ENCODE measurements at regions of chr2 and their contacts with region 1.

Region 1: DNA sequence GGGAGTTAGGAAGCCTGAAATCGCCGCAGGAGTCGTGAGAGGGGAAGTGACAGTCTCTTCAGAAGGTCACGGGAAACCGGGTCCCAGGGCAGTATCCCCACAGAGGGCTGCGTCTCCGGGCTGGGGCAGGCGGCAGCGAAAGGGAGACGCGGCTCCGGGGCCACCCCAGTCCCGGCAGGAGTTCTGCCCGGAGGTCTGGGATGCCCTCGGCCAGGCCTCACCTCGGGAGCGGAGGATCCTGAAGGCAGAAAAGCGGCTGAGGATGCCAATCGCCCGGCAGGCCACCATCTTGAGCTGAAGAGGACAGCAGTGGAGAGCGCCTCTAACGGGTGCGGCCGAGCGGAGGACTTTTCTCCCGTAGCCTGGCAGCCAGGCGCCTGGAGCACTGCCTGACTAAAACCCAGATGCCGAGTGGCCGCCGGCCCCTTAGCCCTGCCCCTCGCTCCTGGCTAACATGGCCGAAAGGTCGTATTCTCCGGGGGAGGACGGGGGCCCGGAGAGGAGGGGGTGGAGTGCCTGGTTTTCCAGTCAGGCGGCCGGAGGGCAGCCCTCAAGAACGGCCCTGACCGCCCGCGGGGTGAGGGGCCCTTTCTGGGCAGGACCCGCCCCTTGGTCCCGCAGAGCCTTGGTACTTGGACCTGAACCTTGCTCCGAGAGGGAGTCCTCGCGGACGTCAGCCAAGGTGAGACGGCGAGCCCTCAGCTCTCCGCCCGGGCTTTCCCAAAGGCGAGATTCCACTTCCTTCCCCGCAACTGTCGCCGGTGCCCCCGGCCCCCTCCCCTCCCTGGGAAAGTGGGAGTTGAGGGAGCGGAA is at the starts of genes HADHA and HADHB:
- DNase-seq: peak; percentile 87 to 94 (median 90)
- H3K4me3 ChIP-seq: peak within 1 kb of the TSS; percentile 75 to 84
- H3K4me3 Mint-ChIP-seq: peak within 1 kb of the TSS; percentile 91 to 100 (median 99)
- H3K27ac ChIP-seq: peak within 1 kb of the TSS; percentile 89
- H3K27ac Mint-ChIP-seq: peak within 1 kb of the TSS; percentile 95 to 100 (median 100)
- H3K4me1 ChIP-seq: peaks cover 43% of the 10 kb centered on the region
- H3K4me1 Mint-ChIP-seq: peaks cover 38 to 70% (median 50%) of the 10 kb centered on the region in 4 donors
- H3K27me3 ChIP-seq: no peaks in the 10 kb centered on the region
- H3K27me3 Mint-ChIP-seq: no peaks in the 10 kb centered on the region
- total RNA-seq, gene HADHA: 89.1 to 93.6 TPM
- total RNA-seq, gene HADHB: 58.8 to 67.1 TPM

Region 2: DNA sequence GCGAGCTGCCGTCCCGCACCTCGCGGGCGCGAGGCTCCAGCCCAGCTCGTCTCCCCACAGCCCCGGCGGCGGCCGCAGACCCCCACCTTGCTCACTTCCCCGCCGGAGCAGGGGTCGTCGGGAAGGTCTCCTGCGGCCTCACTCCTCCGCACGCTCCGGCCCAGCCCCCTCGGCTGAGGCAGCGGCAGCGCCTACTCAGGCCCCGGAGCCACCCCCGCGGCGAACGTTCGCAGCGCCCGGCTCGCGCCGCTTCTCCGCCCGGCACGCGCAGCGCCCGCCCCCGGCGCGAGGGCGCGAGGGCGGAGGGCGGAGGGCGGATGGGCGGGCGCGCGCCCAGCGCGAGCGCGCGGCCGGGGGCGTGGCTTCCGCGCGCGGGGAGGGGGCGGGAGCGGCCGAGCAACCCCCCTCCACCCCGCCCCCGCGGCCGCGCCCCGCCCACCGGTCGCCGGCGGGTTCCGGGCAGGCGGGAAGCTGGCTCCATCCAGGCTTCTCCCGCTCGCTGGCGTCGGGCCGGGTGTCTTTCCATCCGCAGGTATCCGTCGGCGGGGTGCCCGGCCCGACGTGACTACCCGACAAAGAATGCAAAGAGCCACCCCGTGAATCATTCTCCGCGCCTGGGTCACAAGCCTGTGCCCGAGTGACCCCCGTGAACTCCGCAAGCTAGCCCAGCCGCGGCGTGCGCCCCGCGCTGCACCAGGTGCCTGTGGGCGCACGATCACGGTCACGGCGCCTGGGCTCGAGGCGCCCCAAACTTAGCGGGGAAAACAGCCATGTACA is 571.0 kb before region 1 on chr2 and contains the start of gene DTNB:
- CTCF ChIA-PET with region 1: no interaction called
- POLR2A ChIA-PET with region 1: no interaction called
- intact Hi-C with region 1: loop called (anchors 5 kb)
- DNase-seq: peak; percentile 76 to 82 (median 79)
- H3K4me3 ChIP-seq: peak within 1 kb of the TSS; percentile 80 to 92
- H3K4me3 Mint-ChIP-seq: peak within 1 kb of the TSS; percentile 85 to 92 (median 88)
- H3K27ac ChIP-seq: peak within 1 kb of the TSS; percentile 69
- H3K27ac Mint-ChIP-seq: peak within 1 kb of the TSS; percentile 75 to 92 (median 86)
- H3K4me1 ChIP-seq: peaks cover 28% of the 10 kb centered on the region
- H3K4me1 Mint-ChIP-seq: peaks cover 20 to 36% (median 29%) of the 10 kb centered on the region in 4 donors
- H3K27me3 ChIP-seq: no peaks in the 10 kb centered on the region
- H3K27me3 Mint-ChIP-seq: no peaks in the 10 kb centered on the region
- total RNA-seq, gene DTNB: 42.1 to 45.3 TPM

Region 3: GRCh38 chr2:25960920-25961319 is 283.6 kb before region 1 on chr2:
- CTCF ChIA-PET with region 1: no interaction called
- POLR2A ChIA-PET with region 1: no interaction called
- intact Hi-C with region 1: no loop called
- DNase-seq: no peak
- H3K4me3 ChIP-seq: no peak overlapping the region
- H3K4me3 Mint-ChIP-seq: peak overlapping the region in 5 of 8 donors; percentile 13 to 67 (median 62)
- H3K27ac ChIP-seq: no peak overlapping the region
- H3K27ac Mint-ChIP-seq: peak overlapping the region in 4 of 7 donors; percentile 13 to 86 (median 39)
- H3K4me1 ChIP-seq: peaks cover 14% of the 10 kb centered on the region
- H3K4me1 Mint-ChIP-seq: peaks cover 7 to 21% (median 10%) of the 10 kb centered on the region in 4 donors
- H3K27me3 ChIP-seq: no peaks in the 10 kb centered on the region
- H3K27me3 Mint-ChIP-seq: no peaks in the 10 kb centered on the region

Region 4: DNA sequence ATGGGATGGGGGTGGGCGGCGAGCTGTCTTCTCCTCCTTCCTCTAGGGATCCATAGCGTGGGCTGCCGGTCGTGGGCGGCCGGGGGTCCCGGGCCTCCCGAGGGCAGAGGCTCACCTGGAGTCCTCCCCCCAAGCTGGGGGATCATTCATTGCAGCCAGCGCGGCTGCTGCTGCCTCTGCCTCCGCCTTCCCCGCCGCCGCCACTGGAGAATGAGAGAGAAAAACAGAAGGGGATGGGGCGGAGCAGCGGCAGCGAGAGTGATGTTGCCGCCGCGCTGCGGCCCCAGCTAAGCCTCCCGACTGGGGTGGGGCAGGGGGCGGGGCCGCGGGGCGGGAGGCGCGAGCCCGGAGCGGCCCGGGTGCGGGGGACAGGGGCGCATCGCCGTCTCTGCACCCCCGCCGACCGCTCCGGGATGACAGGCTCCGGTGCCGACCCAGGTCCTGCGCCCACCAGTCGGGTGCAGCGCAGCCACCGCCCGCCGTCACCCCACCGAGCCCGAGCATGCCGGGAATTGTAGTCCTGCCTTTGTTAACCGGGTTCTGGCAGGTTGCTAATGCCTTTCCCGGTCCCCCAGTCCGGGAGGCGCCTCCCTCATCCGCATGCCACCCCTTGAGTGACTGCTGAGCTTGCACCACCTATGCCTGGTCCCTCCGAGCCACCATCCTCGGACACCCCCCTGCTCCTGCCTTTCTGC is 262.1 kb before region 1 on chr2 and contains the start of gene KIF3C:
- CTCF ChIA-PET with region 1: no interaction called
- POLR2A ChIA-PET with region 1: no interaction called
- intact Hi-C with region 1: loop called (anchors 1 kb)
- DNase-seq: peak; percentile 71 to 81 (median 74)
- H3K4me3 ChIP-seq: peak within 1 kb of the TSS; percentile 36 to 66
- H3K4me3 Mint-ChIP-seq: peak within 1 kb of the TSS; percentile 83 to 92 (median 87)
- H3K27ac ChIP-seq: peak within 1 kb of the TSS; percentile 44
- H3K27ac Mint-ChIP-seq: peak within 1 kb of the TSS; percentile 36 to 89 (median 75)
- H3K4me1 ChIP-seq: peaks cover 11% of the 10 kb centered on the region
- H3K4me1 Mint-ChIP-seq: peaks cover 4 to 20% (median 9%) of the 10 kb centered on the region in 4 donors
- H3K27me3 ChIP-seq: no peaks in the 10 kb centered on the region
- H3K27me3 Mint-ChIP-seq: no peaks in the 10 kb centered on the region
- total RNA-seq, gene KIF3C: 4.1 to 5.1 TPM

Region 5: DNA sequence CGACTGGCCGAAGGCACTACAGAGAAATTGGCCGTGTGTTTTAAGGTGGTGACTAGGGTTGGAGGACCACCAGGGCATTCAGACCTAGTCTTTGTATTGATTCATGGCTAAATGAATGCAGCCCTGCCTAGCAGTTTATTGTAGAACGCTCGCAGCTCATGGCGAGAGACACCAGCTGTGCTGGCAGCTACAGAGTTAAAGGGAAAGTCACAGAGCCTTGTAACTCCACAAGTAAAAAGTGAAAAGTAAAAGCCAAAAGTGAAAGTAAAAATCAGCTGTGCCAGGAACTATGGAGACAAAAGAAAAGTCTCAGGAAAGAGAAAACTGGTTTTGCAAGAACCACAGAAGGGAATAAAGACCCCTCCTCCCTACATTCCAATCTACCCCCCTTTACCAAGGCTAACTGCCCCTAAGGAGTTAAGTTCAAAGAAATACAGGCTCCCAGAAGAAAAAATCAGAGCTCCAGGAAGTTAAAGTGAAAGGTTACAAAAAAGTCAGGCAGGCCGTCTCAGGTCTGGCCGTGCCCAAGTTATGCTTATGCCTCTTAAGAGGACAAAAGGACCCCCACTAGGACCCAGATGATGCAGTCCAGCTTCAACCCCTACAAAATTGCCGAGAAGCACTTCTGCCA is 55.1 kb after region 1 on chr2:
- CTCF ChIA-PET with region 1: interaction called, 6 read pairs
- POLR2A ChIA-PET with region 1: interaction called, 31 read pairs
- intact Hi-C with region 1: loop called (anchors 2 kb)
- DNase-seq: peak in 4 of 5 donors; percentile 37 to 50 (median 44)
- H3K4me3 ChIP-seq: peak overlapping the region; percentile 53 to 74
- H3K4me3 Mint-ChIP-seq: no peak overlapping the region
- H3K27ac ChIP-seq: peak overlapping the region; percentile 47
- H3K27ac Mint-ChIP-seq: no peak overlapping the region
- H3K4me1 ChIP-seq: peaks cover 14% of the 10 kb centered on the region
- H3K4me1 Mint-ChIP-seq: no peaks in the 10 kb centered on the region
- H3K27me3 ChIP-seq: no peaks in the 10 kb centered on the region
- H3K27me3 Mint-ChIP-seq: no peaks in the 10 kb centered on the region

Region 6: GRCh38 chr2:26345545-26346453 is 101.3 kb after region 1 on chr2 and contains the start of gene SELENOI:
- CTCF ChIA-PET with region 1: no interaction called
- POLR2A ChIA-PET with region 1: interaction called, 8 read pairs
- intact Hi-C with region 1: loop called (anchors 1 kb)
- DNase-seq: peak; percentile 99 to 100 (median 100)
- H3K4me3 ChIP-seq: peak within 1 kb of the TSS; percentile 87 to 98
- H3K4me3 Mint-ChIP-seq: peak within 1 kb of the TSS; percentile 97 to 100 (median 98)
- H3K27ac ChIP-seq: peak within 1 kb of the TSS; percentile 91
- H3K27ac Mint-ChIP-seq: peak within 1 kb of the TSS; percentile 91 to 100 (median 100)
- H3K4me1 ChIP-seq: peaks cover 42% of the 10 kb centered on the region
- H3K4me1 Mint-ChIP-seq: peaks cover 25 to 50% (median 33%) of the 10 kb centered on the region in 4 donors
- H3K27me3 ChIP-seq: no peaks in the 10 kb centered on the region
- H3K27me3 Mint-ChIP-seq: no peaks in the 10 kb centered on the region
- total RNA-seq, gene SELENOI: 19.6 to 20.0 TPM